HEK293 (cell line): ENCODE measurements at regions of chrX and their contacts with region 1.

Region 1: GRCh38 chrX:21745756-21746155 is 12.2 kb downstream of the SMPX start:
- H3K4me3 ChIP-seq: no peak overlapping the region
- H3K27ac ChIP-seq: no peak overlapping the region
- H3K4me1 ChIP-seq: peaks cover 5% of the 10 kb centered on the region
- CTCF ChIP-seq: no peak

Region 2: DNA sequence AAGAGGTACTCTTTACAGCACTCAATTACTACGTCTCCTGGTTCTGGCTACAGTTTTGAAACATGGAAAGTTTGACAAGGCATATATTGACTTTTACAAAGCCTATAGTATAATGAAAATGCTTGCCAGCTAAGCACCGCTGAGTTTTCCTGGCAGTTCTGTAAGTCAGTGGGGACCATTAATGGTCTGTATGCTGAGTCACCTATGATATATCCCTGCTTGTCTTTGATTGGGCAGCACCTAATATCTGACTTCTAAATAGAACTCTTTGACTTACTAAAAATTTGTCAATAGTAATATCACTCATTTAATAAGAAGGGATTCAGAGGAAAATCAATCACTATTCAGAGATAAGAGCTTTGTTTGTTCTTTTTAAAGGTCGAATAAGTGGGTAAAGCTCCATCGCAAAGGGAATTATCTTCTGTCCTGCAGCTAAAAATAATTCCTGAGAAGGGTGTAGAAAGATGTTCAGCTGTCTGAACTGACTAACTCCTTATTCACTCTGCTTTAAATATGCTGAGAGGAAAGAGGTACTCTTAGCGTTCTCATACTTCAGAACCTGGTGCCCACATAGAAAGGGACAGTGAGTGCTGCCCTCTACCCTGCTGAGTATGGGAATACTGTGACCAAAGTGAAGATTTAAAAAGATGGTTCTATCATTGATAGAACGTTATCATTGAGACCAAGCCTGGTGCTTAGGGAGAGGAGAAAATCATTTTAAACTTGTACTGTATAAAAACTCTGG is 11.2 kb after region 1 on chrX:
- CTCF ChIA-PET with region 1: interaction called, 21 read pairs
- POLR2A ChIA-PET with region 1: no interaction called
- H3K4me3 ChIP-seq: no peak overlapping the region
- H3K27ac ChIP-seq: no peak overlapping the region
- H3K4me1 ChIP-seq: no peaks in the 10 kb centered on the region
- CTCF ChIP-seq: no peak

Region 3: GRCh38 chrX:21770631-21771321 is 25.0 kb after region 1 on chrX:
- CTCF ChIA-PET with region 1: interaction called, 10 read pairs
- POLR2A ChIA-PET with region 1: no interaction called
- H3K4me3 ChIP-seq: peak overlapping the region; percentile 5; the same call in 1 of the 2 replicates
- H3K27ac ChIP-seq: peak overlapping the region; percentile 61
- H3K4me1 ChIP-seq: 0 out of 2 replicates have a peak, but pooled peaks cover 2% of the 10 kb centered on the region
- CTCF ChIP-seq: no peak